ENCODE measurements at regions of chr16 and their contacts with region 1.

Region 1: GRCh38 chr16:1879477-1880028 is 7.6 kb upstream of the MEIOB start:
- DNase-seq: no peak
- H3K4me3 ChIP-seq: no peak overlapping the region
- H3K4me3 Mint-ChIP-seq: no peak overlapping the region
- H3K27ac Mint-ChIP-seq: no peak overlapping the region
- H3K4me1 ChIP-seq: no peaks in the 10 kb centered on the region
- H3K4me1 Mint-ChIP-seq: no peaks in the 10 kb centered on the region
- H3K27me3 ChIP-seq: no peaks in the 10 kb centered on the region; the same call in 1 of the 2 replicates
- H3K27me3 Mint-ChIP-seq: no peaks in the 10 kb centered on the region
- CTCF ChIP-seq: no peak

Region 2: GRCh38 chr16:1959269-1960049 is 79.9 kb after region 1 on chr16 and contains the start of gene NDUFB10:
- CTCF ChIA-PET with region 1: no interaction called
- POLR2A ChIA-PET with region 1: interaction called, 17 read pairs
- intact Hi-C with region 1: no loop called
- DNase-seq: peak; percentile 92 to 96
- H3K4me3 ChIP-seq: peak within 1 kb of the TSS; percentile 76
- H3K4me3 Mint-ChIP-seq: peak within 1 kb of the TSS; percentile 89
- H3K27ac Mint-ChIP-seq: peak within 1 kb of the TSS; percentile 87
- H3K4me1 ChIP-seq: peaks cover 17% of the 10 kb centered on the region
- H3K4me1 Mint-ChIP-seq: peaks cover 22% of the 10 kb centered on the region
- H3K27me3 ChIP-seq: no peaks in the 10 kb centered on the region
- H3K27me3 Mint-ChIP-seq: no peaks in the 10 kb centered on the region
- CTCF ChIP-seq: peak; percentile 46 to 49
- total RNA-seq, gene NDUFB10: 128 and 132 TPM in 2 replicates

Measured in Caco-2 (cell line).